ENCODE measurements at regions of chr20 and their contacts with region 1.

Region 1: DNA sequence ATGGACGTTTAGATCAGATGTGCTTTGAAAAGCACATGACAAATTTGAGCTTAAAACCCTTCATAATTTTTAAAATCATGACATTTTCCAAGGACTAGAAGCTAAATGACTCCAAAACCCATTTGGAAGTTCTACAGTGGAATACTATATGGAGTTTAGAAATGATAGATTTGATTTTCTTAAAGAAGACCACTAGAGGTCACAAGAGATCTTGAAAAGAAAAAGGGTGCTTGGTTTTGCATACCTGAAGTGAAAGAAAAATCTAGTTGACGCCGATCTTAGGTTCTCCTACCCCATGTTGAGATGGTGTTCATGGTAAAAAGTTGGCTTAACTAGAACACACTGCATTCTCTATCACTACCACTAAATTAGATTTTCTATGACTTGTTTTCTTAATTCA is 31.5 kb downstream of the CFAP61 start:
- DNase-seq: no peak
- ATAC-seq: peak; percentile 39 to 61

Region 2: GRCh38 chr20:19995220-19995863 is 88.5 kb before region 1 on chr20:
- intact Hi-C with region 1: no loop called
- DNase-seq: no peak
- ATAC-seq: peak; percentile 19 to 32

Region 3: DNA sequence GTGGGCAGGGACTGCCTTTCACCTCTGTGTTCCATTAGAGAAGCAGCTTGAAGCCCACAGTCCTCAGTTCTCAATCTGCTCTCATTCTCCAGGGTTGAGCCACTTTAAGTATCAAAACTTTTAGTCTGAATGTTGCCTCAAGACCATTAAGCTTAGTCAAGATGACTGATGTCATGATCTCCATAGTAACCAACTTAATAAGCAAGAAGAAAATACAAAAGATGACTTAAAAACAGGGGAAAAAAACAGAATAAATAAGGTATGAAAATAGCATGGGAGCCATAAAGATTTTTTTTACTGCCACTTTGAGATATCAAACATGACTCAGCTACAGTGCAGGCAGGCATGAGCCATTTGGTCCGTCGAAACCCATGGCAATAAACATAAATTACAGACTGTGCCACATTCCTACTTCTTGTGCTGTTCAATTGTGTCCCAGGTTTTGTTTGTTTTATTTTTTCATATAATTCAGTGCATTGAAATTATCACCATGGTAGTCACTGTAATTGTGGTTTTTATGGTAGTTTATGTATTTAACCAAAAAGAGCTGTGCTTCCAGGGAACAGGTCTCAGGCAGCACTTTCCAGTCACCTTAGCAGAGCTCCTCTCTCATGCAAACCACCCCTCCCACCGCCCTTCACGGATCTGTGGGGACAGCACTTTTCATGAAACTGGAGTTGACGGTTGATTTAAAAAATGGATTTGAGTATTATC is 127.6 kb after region 1 on chr20:
- intact Hi-C with region 1: loop called in 1 of 2 experiments (anchors 5 kb)
- DNase-seq: no peak
- ATAC-seq: no peak

Region 4: DNA sequence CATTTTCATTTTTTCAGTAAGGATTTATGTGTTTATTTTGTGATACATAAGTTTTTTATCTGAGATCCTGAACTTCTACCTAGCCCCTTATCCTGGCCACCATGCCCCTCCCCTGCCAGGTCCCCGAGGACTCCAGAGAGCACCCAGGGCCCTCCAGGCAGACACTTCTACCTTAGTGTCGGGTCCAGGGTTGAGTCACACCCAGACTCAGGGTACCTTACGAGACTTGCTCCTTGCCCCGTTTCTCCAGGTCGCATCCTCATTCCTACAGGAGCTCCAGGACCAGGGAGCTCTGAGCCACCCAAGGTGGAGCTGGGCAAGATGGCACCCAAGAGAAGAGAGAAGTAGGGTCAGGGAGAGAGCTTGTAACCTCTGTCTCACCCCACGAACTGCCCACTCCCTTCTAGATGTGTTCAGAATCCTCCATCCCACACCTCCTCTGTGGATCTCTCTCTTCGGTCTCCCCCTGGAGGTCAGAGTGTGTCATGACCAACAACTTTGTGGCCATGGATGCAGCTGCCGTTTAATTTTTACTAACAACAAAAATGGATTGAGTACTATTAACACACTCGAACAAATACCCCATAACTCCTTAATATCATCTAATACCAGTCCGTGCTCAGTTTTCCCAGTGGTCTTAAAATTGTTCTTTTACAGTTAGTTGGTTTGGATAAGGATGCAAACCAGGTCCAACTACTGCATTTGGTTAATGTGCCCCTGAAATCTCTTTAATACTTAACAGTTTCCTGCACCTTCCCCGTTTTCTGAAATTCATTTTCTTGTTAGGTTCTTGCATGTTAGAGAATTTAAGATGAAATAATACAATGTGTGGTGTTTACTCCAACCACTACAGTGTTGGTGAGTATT is 153.5 kb after region 1 on chr20:
- intact Hi-C with region 1: loop called (anchors 2 to 5 kb)
- DNase-seq: peak; percentile 28
- ATAC-seq: peak; percentile 34 to 69

Region 5: GRCh38 chr20:20360464-20360863 is 276.7 kb after region 1 on chr20:
- intact Hi-C with region 1: loop called in 1 of 2 experiments (anchors 5 kb)
- DNase-seq: no peak
- ATAC-seq: peak; percentile 82 to 84

Region 6: GRCh38 chr20:20568604-20569205 is 484.9 kb after region 1 on chr20:
- intact Hi-C with region 1: loop called in 1 of 2 experiments (anchors 5 kb)
- DNase-seq: no peak
- ATAC-seq: no peak

Measured in left cardiac atrium (tissue), 4 donors.